ENCODE measurements at regions of chr9 and their contacts with region 1.

Region 1: GRCh38 chr9:93095205-93096130 is 549 bp upstream of the CARD19 start:
- DNase-seq: peak; percentile 99 to 100 (median 99)
- H3K4me3 ChIP-seq: peak overlapping the region; percentile 26 to 98 (median 44)
- H3K4me3 Mint-ChIP-seq: peak overlapping the region; percentile 84 to 91
- H3K27ac ChIP-seq: peak overlapping the region; percentile 97 to 100
- H3K27ac Mint-ChIP-seq: peak overlapping the region; percentile 99 to 100 (median 100)
- H3K4me1 ChIP-seq: peaks cover 74 to 80% of the 10 kb centered on the region in 2 donors
- H3K4me1 Mint-ChIP-seq: peaks cover 72% of the 10 kb centered on the region
- H3K27me3 ChIP-seq: no peaks in the 10 kb centered on the region
- H3K27me3 Mint-ChIP-seq: peaks cover 0 to 2% (median 0%) of the 10 kb centered on the region in 3 donors
- CTCF ChIP-seq: no peak

Region 2: GRCh38 chr9:92963831-92964626 is 131.4 kb before region 1 on chr9:
- intact Hi-C with region 1: loop called in 1 of 2 experiments (anchors 10 kb)
- DNase-seq: peak; percentile 84 to 89 (median 87)
- H3K4me3 ChIP-seq: peak overlapping the region; percentile 60 to 94 (median 90)
- H3K4me3 Mint-ChIP-seq: peak overlapping the region; percentile 97 to 100
- H3K27ac ChIP-seq: peak overlapping the region; percentile 91 to 97
- H3K27ac Mint-ChIP-seq: peak overlapping the region; percentile 96 to 100 (median 99)
- H3K4me1 ChIP-seq: peaks cover 49 to 56% of the 10 kb centered on the region in 2 donors
- H3K4me1 Mint-ChIP-seq: peaks cover 50% of the 10 kb centered on the region
- H3K27me3 ChIP-seq: no peaks in the 10 kb centered on the region
- H3K27me3 Mint-ChIP-seq: no peaks in the 10 kb centered on the region
- CTCF ChIP-seq: no peak

Region 3: DNA sequence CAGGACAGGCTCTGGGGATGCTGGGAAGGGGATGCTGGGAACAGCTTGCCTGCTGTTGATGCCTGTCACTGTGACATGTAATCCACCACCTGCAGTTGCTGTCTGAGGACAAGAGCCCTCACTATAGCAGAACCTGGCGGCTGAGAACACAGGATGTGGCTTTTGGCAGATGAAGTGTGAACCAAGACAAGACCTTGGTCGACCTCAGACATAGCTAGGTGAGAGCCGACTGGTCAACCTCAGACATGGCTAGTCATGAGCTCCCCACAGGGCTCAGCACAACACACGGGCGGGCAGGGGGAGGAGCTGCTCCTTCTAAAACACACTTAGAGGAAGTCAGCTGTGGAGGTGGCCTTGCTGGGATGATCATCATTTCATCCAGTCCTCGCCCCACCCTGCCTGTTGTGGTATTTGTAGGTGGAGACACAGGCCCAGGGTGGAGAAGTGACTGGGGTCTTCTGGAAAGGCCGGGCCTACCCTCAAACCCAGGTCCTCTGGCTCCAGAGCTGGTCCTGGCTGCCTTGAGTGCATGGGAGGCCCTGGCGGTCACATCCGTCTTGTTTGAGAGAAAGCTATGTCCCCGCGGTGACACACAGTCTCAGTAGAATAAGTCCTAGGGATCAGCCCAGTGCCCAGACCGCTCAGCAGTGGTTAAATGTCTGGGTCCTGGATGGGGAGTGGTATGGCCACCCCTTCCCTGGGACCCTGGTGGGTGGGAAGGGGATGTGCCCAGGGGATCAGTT is 30.9 kb before region 1 on chr9:
- intact Hi-C with region 1: loop called in 1 of 2 experiments (anchors 2 kb)
- DNase-seq: peak; percentile 58 to 75 (median 74)
- H3K4me3 ChIP-seq: peak overlapping the region in 1 of 3 experiments; percentile 47
- H3K4me3 Mint-ChIP-seq: peak overlapping the region; percentile 27 to 78
- H3K27ac ChIP-seq: peak overlapping the region in 1 of 2 donors; percentile 49
- H3K27ac Mint-ChIP-seq: peak overlapping the region; percentile 60 to 86 (median 75)
- H3K4me1 ChIP-seq: peaks cover 43 to 60% of the 10 kb centered on the region in 2 donors
- H3K4me1 Mint-ChIP-seq: peaks cover 62% of the 10 kb centered on the region
- H3K27me3 ChIP-seq: no peaks in the 10 kb centered on the region
- H3K27me3 Mint-ChIP-seq: peaks cover 0 to 9% (median 2%) of the 10 kb centered on the region in 3 donors
- CTCF ChIP-seq: no peak

Region 4: GRCh38 chr9:93134015-93134739 is 38.7 kb after region 1 on chr9 and contains the start of gene NINJ1:
- intact Hi-C with region 1: loop called (anchors 5 kb)
- DNase-seq: peak; percentile 93 to 98 (median 94)
- H3K4me3 ChIP-seq: peak within 1 kb of the TSS; percentile 83 to 89 (median 88)
- H3K4me3 Mint-ChIP-seq: peak within 1 kb of the TSS; percentile 92 to 94
- H3K27ac ChIP-seq: peak within 1 kb of the TSS; percentile 86 to 95
- H3K27ac Mint-ChIP-seq: peak within 1 kb of the TSS; percentile 94 to 98 (median 96)
- H3K4me1 ChIP-seq: peaks cover 64% of the 10 kb centered on the region in 2 donors
- H3K4me1 Mint-ChIP-seq: peaks cover 71% of the 10 kb centered on the region
- H3K27me3 ChIP-seq: no peaks in the 10 kb centered on the region
- H3K27me3 Mint-ChIP-seq: peaks cover 6 to 20% (median 12%) of the 10 kb centered on the region in 3 donors
- CTCF ChIP-seq: no peak
- polyA plus RNA-seq, gene NINJ1: 290 to 610 (median 469) TPM

Region 5: GRCh38 chr9:93276968-93277367 is 181.5 kb after region 1 on chr9:
- intact Hi-C with region 1: no loop called
- DNase-seq: no peak
- H3K4me3 ChIP-seq: no peak overlapping the region
- H3K4me3 Mint-ChIP-seq: no peak overlapping the region
- H3K27ac ChIP-seq: no peak overlapping the region
- H3K27ac Mint-ChIP-seq: no peak overlapping the region
- H3K4me1 ChIP-seq: no peaks in the 10 kb centered on the region
- H3K4me1 Mint-ChIP-seq: no peaks in the 10 kb centered on the region
- H3K27me3 ChIP-seq: peaks cover 30 to 33% of the 10 kb centered on the region in 2 donors
- H3K27me3 Mint-ChIP-seq: peaks cover 15 to 51% (median 49%) of the 10 kb centered on the region in 3 donors
- CTCF ChIP-seq: no peak

Region 6: DNA sequence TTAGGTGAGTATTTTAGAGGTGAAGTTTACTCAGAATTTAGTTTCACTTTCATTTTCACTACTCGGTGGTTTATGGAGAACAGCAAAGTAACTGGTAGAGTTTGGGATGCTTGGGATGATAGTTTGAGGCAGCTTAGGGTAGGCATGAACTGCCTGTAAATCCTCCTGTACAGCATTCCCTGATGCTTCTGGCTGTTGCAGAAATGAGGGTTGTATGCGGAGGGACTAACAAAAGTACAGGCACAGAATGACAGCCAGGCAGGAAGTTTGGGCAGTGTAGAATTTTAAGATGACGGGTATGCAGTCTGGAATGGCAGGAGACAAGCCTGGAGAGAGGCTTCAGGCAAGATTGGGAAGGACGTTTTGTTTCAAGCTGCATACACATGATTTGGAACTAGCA is 405.9 kb after region 1 on chr9:
- intact Hi-C with region 1: loop called in 1 of 2 experiments (anchors 10 kb)
- DNase-seq: no peak
- H3K4me3 ChIP-seq: peak overlapping the region in 2 of 3 experiments; percentile 25 to 61
- H3K4me3 Mint-ChIP-seq: peak overlapping the region; percentile 69 to 82
- H3K27ac ChIP-seq: peak overlapping the region in 1 of 2 donors; percentile 72
- H3K27ac Mint-ChIP-seq: peak overlapping the region; percentile 86 to 99 (median 87)
- H3K4me1 ChIP-seq: peaks cover 50 to 63% of the 10 kb centered on the region in 2 donors
- H3K4me1 Mint-ChIP-seq: peaks cover 65% of the 10 kb centered on the region
- H3K27me3 ChIP-seq: no peaks in the 10 kb centered on the region
- H3K27me3 Mint-ChIP-seq: no peaks in the 10 kb centered on the region
- CTCF ChIP-seq: no peak

Measured in CD14-positive monocyte (primary cell).